Endothelial cell of umbilical vein (primary cell): ENCODE measurements at regions of chr2 and their contacts with region 1.

Region 1: DNA sequence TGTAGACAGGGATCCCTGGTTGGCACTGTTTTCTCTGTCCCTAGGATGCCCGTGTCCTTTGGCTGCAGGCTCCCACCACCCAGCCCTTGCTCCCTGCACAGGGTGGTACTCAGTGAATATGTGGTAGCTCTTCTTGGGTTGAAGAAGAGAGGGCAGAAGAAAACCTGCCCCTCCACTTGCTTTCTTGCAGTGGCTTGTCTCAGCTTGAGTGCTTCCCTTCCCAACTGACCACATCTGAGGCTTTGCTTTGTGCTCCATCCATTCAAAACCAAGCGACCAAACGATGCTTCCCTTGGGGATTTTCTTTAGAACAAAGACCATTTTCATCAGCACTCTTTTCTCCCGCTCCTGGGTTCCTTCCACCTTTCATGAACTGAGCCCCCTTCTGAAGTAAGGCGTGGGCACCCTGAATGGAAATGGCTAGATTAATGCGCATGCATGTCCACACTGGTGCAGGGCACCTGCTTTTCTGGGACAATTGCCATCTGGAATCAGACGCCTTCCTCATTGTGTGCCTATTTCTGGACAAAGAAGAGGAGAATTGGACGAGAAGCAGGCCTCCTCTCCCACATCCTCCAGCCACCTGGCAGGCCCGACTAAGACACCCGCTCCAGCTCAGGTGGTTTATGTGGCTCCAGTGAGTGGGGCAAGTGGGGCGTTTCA is 59.1 kb downstream of the ARL4C start:
- DNase-seq: no peak
- H3K4me3 ChIP-seq: no peak overlapping the region
- H3K27ac ChIP-seq: no peak overlapping the region
- H3K4me1 ChIP-seq: peaks cover 11% of the 10 kb centered on the region
- H3K27me3 ChIP-seq: no peaks in the 10 kb centered on the region
- CTCF ChIP-seq: no peak
- POLR2A ChIP-seq: no peak

Region 2: GRCh38 chr2:234251326-234252271 is 186.2 kb before region 1 on chr2:
- CTCF ChIA-PET with region 1: no interaction called
- POLR2A ChIA-PET with region 1: no interaction called
- dilution Hi-C with region 1: no loop called
- intact Hi-C with region 1: loop called (anchors 5 kb)
- DNase-seq: peak; percentile 91
- H3K4me3 ChIP-seq: no peak overlapping the region
- H3K27ac ChIP-seq: peak overlapping the region; percentile 82
- H3K4me1 ChIP-seq: peaks cover 29% of the 10 kb centered on the region
- H3K27me3 ChIP-seq: no peaks in the 10 kb centered on the region
- CTCF ChIP-seq: no peak
- POLR2A ChIP-seq: no peak

Region 3: GRCh38 chr2:234348081-234348480 is 89.7 kb before region 1 on chr2:
- CTCF ChIA-PET with region 1: no interaction called
- POLR2A ChIA-PET with region 1: no interaction called
- dilution Hi-C with region 1: no loop called
- intact Hi-C with region 1: no loop called
- DNase-seq: no peak
- H3K4me3 ChIP-seq: no peak overlapping the region
- H3K27ac ChIP-seq: no peak overlapping the region
- H3K4me1 ChIP-seq: no peaks in the 10 kb centered on the region
- H3K27me3 ChIP-seq: no peaks in the 10 kb centered on the region
- CTCF ChIP-seq: no peak
- POLR2A ChIP-seq: no peak

Region 4: DNA sequence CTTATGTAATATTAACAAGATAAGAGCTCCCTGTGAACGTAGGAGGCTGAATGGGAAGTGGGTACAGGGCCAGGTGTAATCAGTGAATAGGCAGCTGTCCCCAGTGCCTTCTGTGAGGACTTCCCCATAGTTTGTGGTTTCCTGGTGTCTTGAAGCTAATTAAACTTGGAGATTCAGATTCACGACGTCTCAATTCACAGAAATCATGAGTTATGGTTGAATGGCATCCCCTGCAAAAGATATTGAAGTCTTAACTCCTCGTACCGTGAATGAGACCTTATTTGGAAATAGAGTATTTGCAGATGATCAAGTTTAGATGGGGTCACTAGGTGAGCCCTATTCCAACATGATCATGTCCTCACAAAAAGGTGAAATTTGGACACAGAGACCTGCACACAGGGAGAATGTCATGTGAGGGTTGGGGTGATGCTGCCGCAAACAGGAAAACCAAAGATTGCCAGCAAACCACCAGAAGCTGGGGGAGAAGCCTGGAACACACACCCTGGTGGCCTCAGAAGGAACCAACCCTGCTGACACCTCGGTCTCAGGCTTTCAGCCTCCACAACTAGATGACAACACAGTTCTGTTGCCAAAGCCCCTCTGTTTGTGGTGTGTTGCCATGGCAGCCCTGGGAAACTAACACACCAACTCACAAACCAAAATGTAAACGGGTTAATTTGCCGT is 45.9 kb after region 1 on chr2:
- CTCF ChIA-PET with region 1: no interaction called
- POLR2A ChIA-PET with region 1: no interaction called
- dilution Hi-C with region 1: no loop called
- intact Hi-C with region 1: no loop called
- DNase-seq: no peak
- H3K4me3 ChIP-seq: no peak overlapping the region
- H3K27ac ChIP-seq: no peak overlapping the region
- H3K4me1 ChIP-seq: no peaks in the 10 kb centered on the region
- H3K27me3 ChIP-seq: no peaks in the 10 kb centered on the region
- CTCF ChIP-seq: no peak
- POLR2A ChIP-seq: no peak